ENCODE measurements at regions of chr9 and their contacts with region 1.

Region 1: GRCh38 chr9:99807276-99807852 is 14.3 kb upstream of the NR4A3 start:
- DNase-seq: peak; percentile 69
- H3K4me3 Mint-ChIP-seq: no peak overlapping the region
- H3K27ac Mint-ChIP-seq: no peak overlapping the region
- H3K4me1 Mint-ChIP-seq: peaks cover 25% of the 10 kb centered on the region
- H3K27me3 Mint-ChIP-seq: peaks cover 6% of the 10 kb centered on the region

Region 2: GRCh38 chr9:99726758-99727157 is 80.6 kb before region 1 on chr9:
- CTCF ChIA-PET with region 1: no interaction called
- POLR2A ChIA-PET with region 1: no interaction called
- intact Hi-C with region 1: no loop called
- DNase-seq: no peak
- H3K4me3 Mint-ChIP-seq: no peak overlapping the region
- H3K27ac Mint-ChIP-seq: no peak overlapping the region
- H3K4me1 Mint-ChIP-seq: peaks cover 5% of the 10 kb centered on the region
- H3K27me3 Mint-ChIP-seq: peaks cover 2% of the 10 kb centered on the region

Region 3: GRCh38 chr9:99828417-99829176 is 21.2 kb after region 1 on chr9:
- CTCF ChIA-PET with region 1: interaction called, 13 read pairs
- POLR2A ChIA-PET with region 1: interaction called, 3 read pairs
- intact Hi-C with region 1: loop called (anchors 2 kb)
- DNase-seq: no peak
- H3K4me3 Mint-ChIP-seq: no peak overlapping the region
- H3K27ac Mint-ChIP-seq: no peak overlapping the region
- H3K4me1 Mint-ChIP-seq: peaks cover 47% of the 10 kb centered on the region
- H3K27me3 Mint-ChIP-seq: peaks cover 31% of the 10 kb centered on the region

Region 4: DNA sequence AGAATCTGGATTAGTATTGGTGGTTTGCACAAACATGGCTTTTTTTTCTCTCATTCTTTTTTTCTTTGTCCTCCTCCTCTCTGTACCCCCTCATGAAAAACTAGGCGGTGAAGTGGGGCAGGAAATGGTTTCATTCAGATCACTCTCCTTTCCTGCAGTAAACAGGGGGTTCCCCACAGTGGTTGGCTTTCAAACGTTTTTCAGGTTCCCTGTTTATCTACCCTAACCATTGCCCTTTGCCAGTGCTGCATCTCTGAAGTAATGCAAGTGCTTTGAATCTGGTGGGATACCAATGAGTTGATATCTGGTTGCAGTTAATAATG is 44.1 kb after region 1 on chr9:
- CTCF ChIA-PET with region 1: no interaction called
- POLR2A ChIA-PET with region 1: no interaction called
- intact Hi-C with region 1: no loop called
- DNase-seq: peak; percentile 53
- H3K4me3 Mint-ChIP-seq: no peak overlapping the region
- H3K27ac Mint-ChIP-seq: no peak overlapping the region
- H3K4me1 Mint-ChIP-seq: peaks cover 32% of the 10 kb centered on the region
- H3K27me3 Mint-ChIP-seq: no peaks in the 10 kb centered on the region

Region 5: DNA sequence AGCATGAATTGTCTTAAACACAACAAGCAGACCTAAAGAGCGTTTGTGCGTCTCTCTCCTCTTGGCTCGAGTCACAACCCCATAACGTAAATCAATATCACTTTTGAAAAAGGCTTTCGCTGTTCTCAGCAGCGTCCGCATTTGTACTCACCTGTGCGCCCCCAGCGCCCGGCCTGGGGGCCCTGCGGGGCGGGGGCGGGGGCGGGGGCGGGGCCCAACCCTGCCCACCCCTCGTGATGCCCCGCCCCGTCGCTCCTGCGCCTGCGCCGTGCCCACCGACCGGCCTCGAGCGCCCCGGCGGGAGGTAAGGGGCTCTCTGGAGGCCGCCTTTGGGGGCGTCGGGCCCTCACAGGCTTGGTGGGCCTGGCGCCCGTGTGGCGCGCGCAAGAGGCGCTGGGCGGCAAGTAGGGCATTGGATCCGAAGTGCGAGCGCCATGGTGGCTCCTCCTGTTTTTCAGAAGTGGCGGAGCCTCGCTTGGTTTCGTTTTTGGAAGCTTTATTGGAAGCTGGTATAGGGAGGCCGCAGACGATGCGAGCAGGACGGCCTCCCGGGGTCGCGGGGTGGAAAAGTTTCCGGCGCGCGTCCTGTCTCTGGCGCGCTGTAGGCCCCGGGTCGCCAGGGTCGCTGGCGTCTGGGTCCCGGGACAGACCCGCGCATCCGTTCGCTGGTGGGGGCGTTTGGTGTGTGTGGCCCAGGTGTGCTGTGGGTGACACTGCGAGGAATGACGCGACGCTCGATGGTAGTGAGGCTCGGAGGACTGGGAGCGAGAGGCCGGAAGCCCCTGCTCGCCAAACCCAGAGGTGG is 99.2 kb after region 1 on chr9 and contains the start of gene STX17:
- CTCF ChIA-PET with region 1: no interaction called
- POLR2A ChIA-PET with region 1: no interaction called
- intact Hi-C with region 1: loop called (anchors 1 kb)
- DNase-seq: peak; percentile 82
- H3K4me3 Mint-ChIP-seq: peak within 1 kb of the TSS; percentile 96
- H3K27ac Mint-ChIP-seq: peak within 1 kb of the TSS; percentile 95
- H3K4me1 Mint-ChIP-seq: peaks cover 20% of the 10 kb centered on the region
- H3K27me3 Mint-ChIP-seq: peaks cover 3% of the 10 kb centered on the region
- total RNA-seq, gene STX17: 30.6 to 36.1 TPM

Region 6: DNA sequence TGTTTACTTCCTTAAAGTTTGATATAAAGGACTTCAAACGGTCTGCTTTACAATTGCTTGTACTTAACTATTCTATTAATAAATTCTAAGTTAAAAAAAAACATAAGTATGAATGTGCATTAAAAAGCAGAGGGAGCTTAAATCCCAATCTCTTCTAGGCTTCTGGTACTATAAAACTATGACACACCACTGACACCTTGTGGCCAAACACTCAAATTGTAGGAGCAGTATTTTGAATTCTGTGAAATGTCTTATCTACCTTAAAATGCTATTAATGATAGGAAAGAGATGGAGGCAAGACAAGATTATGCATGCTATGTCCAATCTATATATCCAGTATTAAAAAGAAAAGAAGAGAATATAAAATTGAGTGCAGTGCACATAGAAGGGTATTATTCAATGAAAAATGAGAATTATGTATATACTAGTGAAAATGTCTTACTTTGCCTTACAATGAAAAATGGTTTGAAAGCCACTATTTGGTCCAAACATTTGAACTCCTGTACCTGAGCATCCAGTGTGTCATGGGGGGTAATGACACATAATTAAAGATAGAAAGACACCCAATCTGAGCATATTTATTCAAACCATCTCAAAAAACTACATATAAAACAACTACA is 203.8 kb after region 1 on chr9:
- CTCF ChIA-PET with region 1: interaction called, 15 read pairs
- POLR2A ChIA-PET with region 1: no interaction called
- intact Hi-C with region 1: loop called (anchors 1 kb)
- DNase-seq: peak; percentile 20
- H3K4me3 Mint-ChIP-seq: no peak overlapping the region
- H3K27ac Mint-ChIP-seq: no peak overlapping the region
- H3K4me1 Mint-ChIP-seq: no peaks in the 10 kb centered on the region
- H3K27me3 Mint-ChIP-seq: no peaks in the 10 kb centered on the region